H1 (cell line): ENCODE measurements at regions of chr2 and their contacts with region 1.

Region 1: GRCh38 chr2:53253244-53253643 is 514.4 kb upstream of the CHAC2 start:
- DNase-seq: no peak
- H3K4me3 ChIP-seq: no peak overlapping the region
- H3K27ac ChIP-seq: no peak overlapping the region
- H3K4me1 ChIP-seq: peaks cover 0 to 2% (median 0%) of the 10 kb centered on the region in 4 experiments; a peak in 3 of 7 replicates
- H3K27me3 ChIP-seq: no peaks in the 10 kb centered on the region
- CTCF ChIP-seq: no peak
- EP300 ChIP-seq: no peak
- POLR2A ChIP-seq: no peak
- RAD21 ChIP-seq: no peak

Region 2: DNA sequence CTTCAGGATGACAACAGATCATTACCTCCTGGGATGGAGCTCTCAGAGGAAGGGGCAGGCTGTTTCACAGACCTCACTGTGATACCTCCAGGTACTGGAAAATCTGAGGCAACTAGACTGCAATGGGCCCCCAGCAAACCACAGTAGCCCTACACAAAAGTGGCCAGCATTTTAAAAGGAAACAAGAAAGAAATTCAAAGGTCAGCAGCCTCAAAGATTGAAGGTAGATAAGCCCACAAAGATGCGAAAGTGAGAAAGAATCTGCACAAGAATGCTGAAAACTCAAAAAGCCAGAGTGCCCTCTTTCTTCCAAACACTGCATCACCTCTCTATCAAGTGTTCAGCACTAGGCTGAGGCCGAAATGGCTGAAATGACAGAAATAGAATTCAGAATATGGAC is 14.8 kb after region 1 on chr2:
- CTCF ChIA-PET with region 1: interaction called, 16 read pairs
- POLR2A ChIA-PET with region 1: no interaction called
- DNase-seq: no peak
- H3K4me3 ChIP-seq: no peak overlapping the region
- H3K27ac ChIP-seq: no peak overlapping the region
- H3K4me1 ChIP-seq: no peaks in the 10 kb centered on the region
- H3K27me3 ChIP-seq: no peaks in the 10 kb centered on the region
- CTCF ChIP-seq: peak in 1 of 3 experiments; percentile 40; a peak in 1 of 4 replicates
- EP300 ChIP-seq: no peak
- POLR2A ChIP-seq: no peak
- RAD21 ChIP-seq: peak; percentile 50 to 57; a peak in 3 of 4 replicates